HCT116 (cell line): ENCODE measurements at regions of chr6 and their contacts with region 1.

Region 1: GRCh38 chr6:7615611-7616383 is 25.8 kb downstream of the SNRNP48 start:
- DNase-seq: peak; percentile 48
- ATAC-seq: peak; percentile 74
- H3K4me3 ChIP-seq: no peak overlapping the region
- H3K27ac ChIP-seq: no peak overlapping the region
- H3K4me1 ChIP-seq: peaks cover 0 to 2% of the 10 kb centered on the region in 2 experiments; a peak in 1 of 4 replicates
- H3K27me3 ChIP-seq: no peaks in the 10 kb centered on the region
- CTCF ChIP-seq: peak; percentile 70 to 78 (median 74)
- POLR2A ChIP-seq: no peak
- RAD21 ChIP-seq: peak; percentile 92

Region 2: GRCh38 chr6:6556738-6557505 is 1058.9 kb before region 1 on chr6:
- CTCF ChIA-PET with region 1: no interaction called
- POLR2A ChIA-PET with region 1: no interaction called
- RAD21 ChIA-PET with region 1: no interaction called
- intact Hi-C with region 1: loop called (anchors 10 kb)
- DNase-seq: peak; percentile 43
- ATAC-seq: peak; percentile 96
- H3K4me3 ChIP-seq: no peak overlapping the region
- H3K27ac ChIP-seq: no peak overlapping the region
- H3K4me1 ChIP-seq: no peaks in the 10 kb centered on the region
- H3K27me3 ChIP-seq: peaks cover 49% of the 10 kb centered on the region
- CTCF ChIP-seq: peak; percentile 71 to 97 (median 94)
- POLR2A ChIP-seq: no peak
- RAD21 ChIP-seq: peak; percentile 78

Region 3: GRCh38 chr6:6676910-6677441 is 938.8 kb before region 1 on chr6:
- CTCF ChIA-PET with region 1: interaction called, 11 read pairs
- POLR2A ChIA-PET with region 1: no interaction called
- RAD21 ChIA-PET with region 1: no interaction called
- intact Hi-C with region 1: loop called (anchors 1 kb)
- DNase-seq: peak; percentile 65
- ATAC-seq: peak; percentile 92
- H3K4me3 ChIP-seq: no peak overlapping the region
- H3K27ac ChIP-seq: no peak overlapping the region
- H3K4me1 ChIP-seq: peaks cover 0 to 21% of the 10 kb centered on the region in 2 experiments; a peak in 2 of 4 replicates
- H3K27me3 ChIP-seq: no peaks in the 10 kb centered on the region
- CTCF ChIP-seq: peak; percentile 85 to 92 (median 92)
- POLR2A ChIP-seq: no peak
- RAD21 ChIP-seq: peak; percentile 97

Region 4: GRCh38 chr6:6724539-6725467 is 891.0 kb before region 1 on chr6:
- CTCF ChIA-PET with region 1: no interaction called
- POLR2A ChIA-PET with region 1: no interaction called
- RAD21 ChIA-PET with region 1: no interaction called
- intact Hi-C with region 1: loop called (anchors 10 kb)
- DNase-seq: peak; percentile 58
- ATAC-seq: peak; percentile 85
- H3K4me3 ChIP-seq: no peak overlapping the region
- H3K27ac ChIP-seq: no peak overlapping the region; the same call in 1 of the 2 replicates
- H3K4me1 ChIP-seq: peaks cover 0 to 20% of the 10 kb centered on the region in 2 experiments; a peak in 2 of 4 replicates
- H3K27me3 ChIP-seq: no peaks in the 10 kb centered on the region
- CTCF ChIP-seq: peak; percentile 59 to 78 (median 75)
- POLR2A ChIP-seq: no peak
- RAD21 ChIP-seq: peak; percentile 95

Region 5: GRCh38 chr6:7276199-7276524 is 339.6 kb before region 1 on chr6:
- CTCF ChIA-PET with region 1: interaction called, 17 read pairs
- POLR2A ChIA-PET with region 1: interaction called, 3 read pairs
- RAD21 ChIA-PET with region 1: no interaction called
- intact Hi-C with region 1: loop called (anchors 1 kb)
- DNase-seq: no peak
- ATAC-seq: peak; percentile 48
- H3K4me3 ChIP-seq: no peak overlapping the region
- H3K27ac ChIP-seq: no peak overlapping the region
- H3K4me1 ChIP-seq: no peaks in the 10 kb centered on the region; a peak in 1 of 4 replicates
- H3K27me3 ChIP-seq: no peaks in the 10 kb centered on the region
- CTCF ChIP-seq: no peak
- POLR2A ChIP-seq: no peak
- RAD21 ChIP-seq: no peak

Region 6: GRCh38 chr6:7424967-7425807 is 190.6 kb before region 1 on chr6:
- CTCF ChIA-PET with region 1: interaction called, 11 read pairs
- POLR2A ChIA-PET with region 1: no interaction called
- RAD21 ChIA-PET with region 1: no interaction called
- intact Hi-C with region 1: loop called (anchors 2 kb)
- DNase-seq: peak; percentile 24
- ATAC-seq: peak; percentile 73
- H3K4me3 ChIP-seq: no peak overlapping the region
- H3K27ac ChIP-seq: no peak overlapping the region
- H3K4me1 ChIP-seq: peaks cover 0 to 12% of the 10 kb centered on the region in 2 experiments; a peak in 1 of 4 replicates
- H3K27me3 ChIP-seq: no peaks in the 10 kb centered on the region
- CTCF ChIP-seq: peak; percentile 55 to 61 (median 61); a peak in 5 of 6 replicates
- POLR2A ChIP-seq: no peak
- RAD21 ChIP-seq: peak; percentile 89